Thyroid gland (tissue), 4 donors: ENCODE measurements at regions of chr4 and their contacts with region 1.

Region 1: GRCh38 chr4:31539284-31540074 is 819.3 kb downstream of the PCDH7 start:
- DNase-seq: peak; percentile 17 to 19
- H3K4me3 ChIP-seq: no peak overlapping the region
- H3K27ac ChIP-seq: no peak overlapping the region
- H3K4me1 ChIP-seq: no peaks in the 10 kb centered on the region
- H3K27me3 ChIP-seq: no peaks in the 10 kb centered on the region
- CTCF ChIP-seq: no peak
- POLR2A ChIP-seq: no peak

Region 2: DNA sequence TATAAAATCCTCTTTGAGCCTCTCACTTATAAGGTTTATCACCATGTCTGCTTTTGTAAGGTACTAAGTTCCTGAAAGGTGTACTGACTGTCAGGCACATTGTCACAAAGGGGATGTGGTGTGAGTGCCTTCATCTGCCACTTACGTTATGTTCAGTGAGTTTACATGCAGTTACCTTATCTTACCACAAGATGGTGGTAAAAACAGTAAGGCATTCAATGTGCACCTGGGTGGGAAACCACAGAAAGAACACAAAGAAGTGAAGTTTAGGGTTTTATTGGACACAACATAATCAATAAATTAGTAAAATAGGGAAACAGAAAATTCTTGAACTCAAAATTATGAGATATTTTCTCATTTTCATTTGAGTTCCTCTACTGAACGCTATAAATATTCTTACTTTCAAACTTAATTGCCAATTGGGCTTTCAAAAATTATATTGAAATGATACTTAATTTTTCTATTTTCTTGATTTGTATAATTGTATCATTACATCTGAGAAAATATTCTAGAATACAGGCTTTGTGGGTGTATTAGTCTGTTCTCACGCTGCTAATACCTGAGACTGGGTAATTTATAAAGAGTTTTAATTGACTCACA is 168.5 kb before region 1 on chr4:
- intact Hi-C with region 1: loop called (anchors 10 kb)
- DNase-seq: no peak
- H3K4me3 ChIP-seq: no peak overlapping the region
- H3K27ac ChIP-seq: no peak overlapping the region
- H3K4me1 ChIP-seq: no peaks in the 10 kb centered on the region
- H3K27me3 ChIP-seq: no peaks in the 10 kb centered on the region
- CTCF ChIP-seq: peak; percentile 47 to 81 (median 70)
- POLR2A ChIP-seq: no peak

Region 3: DNA sequence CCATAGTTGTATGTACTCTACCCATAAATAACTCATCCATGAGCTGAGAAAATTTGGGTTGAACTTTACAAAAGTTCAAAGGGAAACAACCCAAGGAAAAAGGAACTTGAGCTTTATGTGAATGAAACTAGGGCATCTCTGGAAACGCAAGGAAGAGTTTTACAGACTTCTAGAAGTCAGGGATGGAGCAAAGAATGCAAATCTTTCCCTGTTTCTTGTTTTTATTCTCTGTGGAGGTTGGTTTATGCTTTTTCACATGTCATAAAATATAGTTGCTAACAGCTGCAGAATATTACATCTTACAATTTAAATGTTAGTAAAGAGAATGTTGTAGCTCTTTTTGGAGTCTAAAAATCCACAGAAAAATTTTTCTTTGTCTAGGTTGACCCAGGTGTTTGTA is 65.3 kb before region 1 on chr4:
- intact Hi-C with region 1: no loop called
- DNase-seq: no peak
- H3K4me3 ChIP-seq: no peak overlapping the region
- H3K27ac ChIP-seq: no peak overlapping the region
- H3K4me1 ChIP-seq: no peaks in the 10 kb centered on the region
- H3K27me3 ChIP-seq: no peaks in the 10 kb centered on the region
- CTCF ChIP-seq: no peak
- POLR2A ChIP-seq: no peak

Region 4: GRCh38 chr4:31655328-31655727 is 115.8 kb after region 1 on chr4:
- intact Hi-C with region 1: no loop called
- DNase-seq: no peak
- H3K4me3 ChIP-seq: no peak overlapping the region
- H3K27ac ChIP-seq: no peak overlapping the region
- H3K4me1 ChIP-seq: no peaks in the 10 kb centered on the region
- H3K27me3 ChIP-seq: no peaks in the 10 kb centered on the region
- CTCF ChIP-seq: no peak
- POLR2A ChIP-seq: no peak